Activated CD4-positive, alpha-beta T cell treated with anti-CD3 and anti-CD28 coated beads, Interleukin-2, amount 10 ng/mL, durations not matched to agents 24 days and 14 days (primary cell): ENCODE measurements at regions of chr4 and their contacts with region 1.

Region 1: DNA sequence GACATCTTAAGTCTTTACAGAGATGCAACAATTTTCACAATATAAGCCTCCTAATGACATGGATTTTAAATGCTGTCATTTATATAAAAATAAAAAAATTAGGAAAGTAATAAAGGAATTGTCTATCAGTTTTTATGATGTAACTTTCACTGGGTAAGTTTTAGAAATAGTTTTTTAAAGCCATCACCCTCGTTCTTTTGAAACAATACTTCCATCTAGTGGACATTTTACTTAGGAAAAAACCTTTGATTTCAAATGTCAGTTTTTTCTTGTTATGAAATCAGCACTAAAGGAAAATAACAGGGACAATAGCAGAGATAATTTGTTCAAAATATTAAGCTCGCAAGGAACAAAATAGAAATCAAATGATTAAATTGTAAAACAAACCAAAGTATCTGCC is 24.3 kb upstream of the NDNF start:
- DNase-seq: no peak
- H3K4me3 Mint-ChIP-seq: no peak overlapping the region
- H3K27ac Mint-ChIP-seq: no peak overlapping the region
- H3K4me1 Mint-ChIP-seq: no peaks in the 10 kb centered on the region
- H3K27me3 Mint-ChIP-seq: peaks cover 23% of the 10 kb centered on the region

Region 2: DNA sequence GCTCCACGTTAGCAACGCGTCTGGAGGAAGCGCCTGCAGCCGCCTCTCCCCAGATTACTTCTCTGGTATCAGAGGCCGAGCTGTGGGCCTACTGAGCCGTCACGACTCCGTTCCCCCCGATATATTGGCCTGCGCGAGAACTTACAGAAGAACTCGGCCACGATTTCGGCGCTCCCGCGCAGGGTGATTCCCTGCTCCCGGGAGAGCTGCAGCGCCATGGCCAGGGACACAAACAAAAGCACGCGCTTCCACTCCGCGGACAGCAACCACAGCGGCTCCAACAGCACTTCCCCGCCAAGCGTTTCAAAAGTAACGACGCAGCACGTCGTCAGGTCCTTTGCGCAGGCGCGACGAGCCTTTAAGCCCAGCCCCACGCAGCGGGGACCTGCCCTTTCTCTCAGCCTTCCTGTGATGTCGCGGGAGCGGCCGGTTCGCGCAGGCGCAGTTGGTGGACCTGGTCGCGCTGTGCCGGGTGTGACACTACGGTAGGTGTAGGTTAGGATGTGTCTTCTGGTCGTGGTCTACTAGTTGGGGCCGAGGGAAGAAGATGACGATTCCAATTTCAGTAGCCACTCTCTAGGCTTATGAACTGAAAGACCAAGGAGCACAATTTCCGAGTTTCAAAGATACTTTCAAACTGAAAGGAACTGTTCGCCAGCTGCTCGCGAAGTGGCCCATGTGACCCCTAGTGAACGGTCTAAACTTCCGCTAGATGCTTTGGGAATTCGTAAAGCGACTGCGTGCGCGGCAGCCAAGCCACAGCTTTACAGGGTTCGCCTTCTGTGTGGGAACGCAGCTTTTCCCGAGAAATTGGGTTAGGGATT is 1029.9 kb before region 1 on chr4 and contains the start of gene MAD2L1:
- intact Hi-C with region 1: loop called (anchors 5 kb)
- DNase-seq: peak; percentile 99
- H3K4me3 Mint-ChIP-seq: peak within 1 kb of the TSS; percentile 91
- H3K27ac Mint-ChIP-seq: peak within 1 kb of the TSS; percentile 100
- H3K4me1 Mint-ChIP-seq: peaks cover 48% of the 10 kb centered on the region
- H3K27me3 Mint-ChIP-seq: no peaks in the 10 kb centered on the region
- total RNA-seq, gene MAD2L1: 69.2 and 75.3 TPM in 2 replicates

Region 3: DNA sequence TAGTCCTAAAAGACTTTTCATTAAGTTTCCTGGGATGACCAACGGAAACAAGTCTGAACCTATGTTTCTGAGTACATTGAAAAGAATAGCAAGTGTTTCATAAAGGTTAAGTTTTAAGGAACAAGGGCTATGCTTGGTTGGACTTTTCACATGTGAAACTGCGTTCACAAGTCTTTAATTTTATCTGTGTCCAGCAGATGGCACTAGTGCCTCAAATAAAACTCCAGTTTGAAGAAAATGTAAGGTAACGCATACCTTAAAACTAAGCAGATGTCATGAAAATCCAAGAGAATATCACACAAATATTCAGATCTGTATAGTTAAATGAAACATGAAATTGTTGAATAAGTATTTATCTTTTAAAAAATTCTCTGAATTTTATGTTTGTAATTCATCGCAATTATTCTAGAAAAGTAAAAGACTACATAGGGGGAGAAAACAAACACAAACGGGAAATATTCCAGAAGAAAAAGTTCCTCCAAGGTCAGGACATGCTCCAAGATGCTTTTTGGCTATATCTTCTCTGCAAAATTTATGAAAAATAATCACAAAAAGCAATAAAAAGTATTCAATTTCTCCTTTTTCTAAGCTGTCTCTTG is 940.4 kb before region 1 on chr4:
- intact Hi-C with region 1: loop called (anchors 1 kb)
- DNase-seq: peak; percentile 81
- H3K4me3 Mint-ChIP-seq: no peak overlapping the region
- H3K27ac Mint-ChIP-seq: no peak overlapping the region
- H3K4me1 Mint-ChIP-seq: no peaks in the 10 kb centered on the region
- H3K27me3 Mint-ChIP-seq: peaks cover 8% of the 10 kb centered on the region

Region 4: GRCh38 chr4:120718979-120719566 is 377.6 kb before region 1 on chr4:
- intact Hi-C with region 1: loop called (anchors 2 kb)
- DNase-seq: peak; percentile 62
- H3K4me3 Mint-ChIP-seq: no peak overlapping the region
- H3K27ac Mint-ChIP-seq: no peak overlapping the region
- H3K4me1 Mint-ChIP-seq: no peaks in the 10 kb centered on the region
- H3K27me3 Mint-ChIP-seq: peaks cover 15% of the 10 kb centered on the region

Region 5: GRCh38 chr4:121168446-121169281 is 72.0 kb after region 1 on chr4:
- intact Hi-C with region 1: no loop called
- DNase-seq: no peak
- H3K4me3 Mint-ChIP-seq: no peak overlapping the region
- H3K27ac Mint-ChIP-seq: no peak overlapping the region
- H3K4me1 Mint-ChIP-seq: peaks cover 37% of the 10 kb centered on the region
- H3K27me3 Mint-ChIP-seq: no peaks in the 10 kb centered on the region

Region 6: GRCh38 chr4:121307445-121308327 is 211.1 kb after region 1 on chr4:
- intact Hi-C with region 1: loop called (anchors 5 kb)
- DNase-seq: peak; percentile 84
- H3K4me3 Mint-ChIP-seq: no peak overlapping the region
- H3K27ac Mint-ChIP-seq: no peak overlapping the region
- H3K4me1 Mint-ChIP-seq: peaks cover 13% of the 10 kb centered on the region
- H3K27me3 Mint-ChIP-seq: peaks cover 17% of the 10 kb centered on the region

Region 7: GRCh38 chr4:121411151-121411744 is 314.6 kb after region 1 on chr4:
- intact Hi-C with region 1: no loop called
- DNase-seq: no peak
- H3K4me3 Mint-ChIP-seq: no peak overlapping the region
- H3K27ac Mint-ChIP-seq: no peak overlapping the region
- H3K4me1 Mint-ChIP-seq: peaks cover 2% of the 10 kb centered on the region
- H3K27me3 Mint-ChIP-seq: peaks cover 5% of the 10 kb centered on the region